ENCODE measurements at regions of chr1 and their contacts with region 1.

Region 1: GRCh38 chr1:37553927-37554808 is at the start of gene SNIP1:
- DNase-seq: peak; percentile 95
- ATAC-seq: peak; percentile 93
- H3K4me3 Mint-ChIP-seq: peak within 1 kb of the TSS; percentile 92
- H3K27ac Mint-ChIP-seq: peak within 1 kb of the TSS; percentile 95
- H3K4me1 Mint-ChIP-seq: peaks cover 36% of the 10 kb centered on the region
- H3K27me3 Mint-ChIP-seq: no peaks in the 10 kb centered on the region
- total RNA-seq, gene SNIP1: 18.7 to 21.3 TPM

Region 2: GRCh38 chr1:37394574-37395464 is 159.3 kb before region 1 on chr1:
- CTCF ChIA-PET with region 1: no interaction called
- POLR2A ChIA-PET with region 1: no interaction called
- intact Hi-C with region 1: no loop called
- DNase-seq: no peak
- ATAC-seq: no peak
- H3K4me3 Mint-ChIP-seq: no peak overlapping the region
- H3K27ac Mint-ChIP-seq: no peak overlapping the region
- H3K4me1 Mint-ChIP-seq: peaks cover under 1% of the 10 kb centered on the region
- H3K27me3 Mint-ChIP-seq: peaks cover 11% of the 10 kb centered on the region

Region 3: GRCh38 chr1:37458528-37458927 is 95.6 kb before region 1 on chr1:
- CTCF ChIA-PET with region 1: no interaction called
- POLR2A ChIA-PET with region 1: no interaction called
- intact Hi-C with region 1: loop called in 1 of 2 experiments (anchors 5 kb)
- DNase-seq: no peak
- ATAC-seq: no peak
- H3K4me3 Mint-ChIP-seq: no peak overlapping the region
- H3K27ac Mint-ChIP-seq: no peak overlapping the region
- H3K4me1 Mint-ChIP-seq: peaks cover 7% of the 10 kb centered on the region
- H3K27me3 Mint-ChIP-seq: no peaks in the 10 kb centered on the region

Region 4: GRCh38 chr1:37514350-37515184 is 39.6 kb before region 1 on chr1 and contains the start of gene MEAF6:
- CTCF ChIA-PET with region 1: interaction called, 9 read pairs
- POLR2A ChIA-PET with region 1: interaction called, 7 read pairs
- intact Hi-C with region 1: loop called (anchors 1 kb)
- DNase-seq: peak; percentile 91
- ATAC-seq: peak; percentile 88
- H3K4me3 Mint-ChIP-seq: peak within 1 kb of the TSS; percentile 87
- H3K27ac Mint-ChIP-seq: peak within 1 kb of the TSS; percentile 93
- H3K4me1 Mint-ChIP-seq: peaks cover 41% of the 10 kb centered on the region
- H3K27me3 Mint-ChIP-seq: no peaks in the 10 kb centered on the region
- total RNA-seq, gene MEAF6: 66.8 to 72.2 TPM

Region 5: DNA sequence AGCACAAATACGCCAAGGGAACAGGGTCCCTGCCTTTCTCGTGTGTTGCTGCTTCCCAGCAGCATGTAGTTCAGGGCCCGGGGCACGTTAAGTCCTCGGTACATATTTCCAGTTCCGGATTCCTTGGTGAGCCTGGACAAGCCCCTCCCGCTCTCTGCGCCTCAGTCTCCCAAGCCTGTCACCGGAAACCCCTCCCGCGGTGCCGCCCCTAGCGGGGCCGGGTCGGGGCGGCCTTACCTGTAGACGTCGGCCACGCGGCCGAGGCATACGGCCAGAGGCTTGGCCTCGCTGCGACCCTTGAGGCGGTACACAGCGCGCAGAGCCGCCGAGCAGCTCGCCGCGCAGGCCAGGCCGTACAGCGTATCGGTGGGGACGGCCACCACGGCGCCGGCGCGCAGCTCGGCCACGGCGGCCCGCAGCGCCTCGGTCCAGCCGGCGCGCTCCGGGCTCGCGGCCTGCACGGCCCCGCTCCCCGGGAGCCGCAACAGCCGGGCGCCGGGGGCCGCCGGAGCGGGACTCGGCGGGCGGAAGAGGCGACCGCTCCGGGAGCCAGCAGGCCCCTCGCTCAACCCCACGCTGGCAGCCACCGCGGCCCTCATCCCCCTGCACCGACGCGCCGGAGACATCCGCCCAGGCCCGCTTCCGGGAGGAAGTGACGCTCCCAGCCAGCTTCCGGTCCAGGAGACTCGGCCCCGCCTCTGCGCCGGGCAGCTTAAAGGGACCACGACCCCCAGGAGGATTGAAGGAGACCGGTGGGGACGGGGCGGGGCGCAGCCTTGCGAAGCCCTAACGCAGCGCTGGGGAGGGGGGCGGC is 253.6 kb after region 1 on chr1 and contains the starts of genes C1orf122 and YRDC:
- CTCF ChIA-PET with region 1: no interaction called
- POLR2A ChIA-PET with region 1: interaction called, 4 read pairs
- intact Hi-C with region 1: loop called in 1 of 2 experiments (anchors 1 kb)
- DNase-seq: peak; percentile 95
- ATAC-seq: peak; percentile 92
- H3K4me3 Mint-ChIP-seq: peak within 1 kb of the TSS; percentile 90
- H3K27ac Mint-ChIP-seq: peak within 1 kb of the TSS; percentile 93
- H3K4me1 Mint-ChIP-seq: peaks cover 34% of the 10 kb centered on the region
- H3K27me3 Mint-ChIP-seq: no peaks in the 10 kb centered on the region
- total RNA-seq, gene C1orf122: 10.8 to 17.9 TPM
- total RNA-seq, gene YRDC: 22.9 to 36.3 TPM

Region 6: GRCh38 chr1:37859507-37860345 is 305.6 kb after region 1 on chr1 and contains the start of gene MTF1:
- CTCF ChIA-PET with region 1: interaction called, 3 read pairs
- POLR2A ChIA-PET with region 1: no interaction called
- intact Hi-C with region 1: loop called in 1 of 2 experiments (anchors 1 kb)
- DNase-seq: peak; percentile 98
- ATAC-seq: peak; percentile 98
- H3K4me3 Mint-ChIP-seq: peak within 1 kb of the TSS; percentile 87
- H3K27ac Mint-ChIP-seq: peak within 1 kb of the TSS; percentile 93
- H3K4me1 Mint-ChIP-seq: peaks cover 40% of the 10 kb centered on the region
- H3K27me3 Mint-ChIP-seq: no peaks in the 10 kb centered on the region
- total RNA-seq, gene MTF1: 16.1 to 23.8 TPM

Measured in activated CD4-positive, alpha-beta T cell treated with anti-CD3 and anti-CD28 coated beads for 36 hours (primary cell).